ENCODE measurements at regions of chr4 and their contacts with region 1.

Region 1: GRCh38 chr4:52983563-52984303 is 121.6 kb downstream of the RASL11B start:
- DNase-seq: no peak
- H3K4me3 ChIP-seq: no peak overlapping the region
- H3K27ac ChIP-seq: peak overlapping the region in 1 of 2 donors; percentile 33
- H3K4me1 ChIP-seq: peaks cover 19% of the 10 kb centered on the region
- H3K27me3 ChIP-seq: no peaks in the 10 kb centered on the region
- CTCF ChIP-seq: peak; percentile 53 to 66 (median 63)
- POLR2A ChIP-seq: no peak

Region 2: GRCh38 chr4:52376132-52376704 is 607.5 kb before region 1 on chr4:
- intact Hi-C with region 1: loop called (anchors 10 kb)
- DNase-seq: peak; percentile 51
- H3K4me3 ChIP-seq: no peak overlapping the region
- H3K27ac ChIP-seq: no peak overlapping the region
- H3K4me1 ChIP-seq: no peaks in the 10 kb centered on the region
- H3K27me3 ChIP-seq: no peaks in the 10 kb centered on the region
- CTCF ChIP-seq: peak; percentile 73 to 91 (median 83)
- POLR2A ChIP-seq: no peak